A673 (cell line): ENCODE measurements at regions of chr7 and their contacts with region 1.

Region 1: DNA sequence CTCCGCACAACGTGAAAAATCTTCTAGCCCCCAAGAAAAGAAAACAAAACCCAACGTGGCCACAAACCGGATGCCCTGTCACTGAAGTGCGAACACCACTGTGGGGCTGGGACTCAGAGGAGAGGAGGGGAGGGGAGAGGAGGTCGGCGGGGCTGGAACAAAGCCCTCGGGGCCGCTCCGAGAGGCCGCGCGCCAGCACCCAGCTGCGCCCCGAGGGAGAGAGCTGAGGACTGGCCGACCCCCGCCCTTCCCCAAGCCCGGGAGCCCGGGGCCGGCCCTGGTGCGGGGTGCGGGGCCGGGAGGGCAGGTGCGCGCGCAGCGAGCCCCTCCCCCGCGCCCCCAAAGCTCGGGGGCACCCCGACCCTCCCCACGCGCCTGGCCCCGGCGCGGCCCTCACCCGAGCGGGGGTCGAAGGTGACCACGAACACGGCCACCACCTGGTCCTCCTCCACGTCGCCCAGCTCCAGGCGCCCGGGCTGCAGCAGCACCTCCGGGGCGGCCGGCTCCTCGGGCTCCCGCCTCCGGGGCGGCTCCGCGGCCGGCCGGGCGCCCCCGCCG is 398 bp downstream of the DENND11 start:
- DNase-seq: peak; percentile 57
- H3K4me3 ChIP-seq: peak overlapping the region; percentile 87
- H3K27ac ChIP-seq: peak overlapping the region; percentile 61
- H3K4me1 ChIP-seq: peaks cover 6% of the 10 kb centered on the region
- H3K27me3 ChIP-seq: no peaks in the 10 kb centered on the region
- CTCF ChIP-seq: no peak

Region 2: DNA sequence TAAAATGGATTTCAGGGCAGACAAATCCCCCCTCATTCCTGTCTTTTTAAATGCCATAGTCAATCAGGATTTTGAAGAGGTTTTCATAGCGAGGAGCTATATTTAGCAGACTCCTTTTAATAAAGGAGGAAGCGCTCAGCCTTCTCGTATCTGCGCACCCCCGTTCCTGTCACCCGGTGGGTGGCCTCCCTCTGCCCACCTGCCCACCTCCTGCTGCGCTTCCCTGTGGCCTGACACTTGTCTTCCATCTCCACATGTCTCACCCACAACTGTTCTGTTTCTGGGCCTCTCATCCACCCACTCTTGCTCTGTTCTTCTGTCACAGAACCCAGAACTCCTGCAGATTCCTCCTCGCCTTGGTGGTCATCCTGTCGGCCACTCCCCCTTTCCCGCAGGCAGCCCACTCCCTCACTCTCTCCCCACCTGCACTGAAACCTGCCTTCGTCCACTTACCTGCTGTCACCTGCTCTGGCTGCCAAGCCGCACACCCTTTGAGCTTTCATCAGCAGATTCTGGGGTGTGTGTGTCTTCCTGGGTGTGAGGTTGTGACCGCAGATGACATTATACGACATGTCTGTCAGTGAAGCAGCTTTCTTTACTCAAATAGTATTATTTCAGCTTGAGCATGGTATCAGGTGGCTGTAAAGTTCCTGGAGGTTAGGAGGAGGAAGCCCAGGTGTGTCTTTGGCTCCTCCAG is 313.9 kb before region 1 on chr7:
- CTCF ChIA-PET with region 1: no interaction called
- POLR2A ChIA-PET with region 1: no interaction called
- intact Hi-C with region 1: no loop called
- DNase-seq: no peak
- H3K4me3 ChIP-seq: no peak overlapping the region
- H3K27ac ChIP-seq: no peak overlapping the region
- H3K4me1 ChIP-seq: no peaks in the 10 kb centered on the region
- H3K27me3 ChIP-seq: no peaks in the 10 kb centered on the region
- CTCF ChIP-seq: no peak

Region 3: DNA sequence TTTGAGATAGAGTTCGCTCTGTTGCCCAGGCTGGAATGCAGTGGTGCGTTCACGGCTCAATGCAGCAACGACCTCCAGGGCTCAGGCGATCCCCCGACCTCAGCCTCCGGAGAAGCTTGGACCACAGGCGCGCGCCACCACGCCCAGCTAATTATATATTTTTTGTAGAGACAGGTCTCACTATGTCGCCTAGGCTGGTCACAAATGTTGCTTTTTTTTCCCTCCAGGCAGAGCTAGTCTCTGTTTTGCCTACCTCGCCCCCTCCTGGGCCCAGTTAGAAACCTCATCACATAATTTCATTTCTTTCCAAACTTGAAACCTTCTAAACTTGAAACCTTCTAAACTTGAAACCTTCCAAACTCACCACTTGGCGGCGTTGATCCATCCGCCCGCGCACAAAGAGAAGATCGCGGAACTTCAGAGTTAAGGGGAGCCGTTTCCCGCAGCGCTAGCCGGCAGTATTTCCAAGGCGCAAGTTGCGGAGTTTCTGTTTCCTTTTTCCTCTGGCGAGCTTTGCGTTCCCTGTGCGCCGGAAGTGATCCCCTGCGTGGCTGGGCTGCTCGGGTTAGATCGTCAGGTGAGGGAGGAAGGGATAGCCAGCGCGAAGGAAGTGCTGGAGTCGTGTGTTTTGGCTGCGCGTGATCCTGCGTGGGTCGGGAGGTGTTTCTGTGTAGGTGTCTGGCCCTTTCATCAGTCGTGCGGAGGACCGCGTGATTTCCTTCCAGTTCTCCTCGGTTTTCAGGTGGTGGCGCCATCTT is 36.4 kb after region 1 on chr7 and contains the start of gene SSBP1:
- CTCF ChIA-PET with region 1: no interaction called
- POLR2A ChIA-PET with region 1: no interaction called
- intact Hi-C with region 1: loop called (anchors 5 kb)
- DNase-seq: peak; percentile 98
- H3K4me3 ChIP-seq: peak within 1 kb of the TSS; percentile 66
- H3K27ac ChIP-seq: peak within 1 kb of the TSS; percentile 70
- H3K4me1 ChIP-seq: peaks cover 15% of the 10 kb centered on the region
- H3K27me3 ChIP-seq: no peaks in the 10 kb centered on the region
- CTCF ChIP-seq: peak; percentile 97
- total RNA-seq, gene SSBP1: 186 and 189 TPM in 2 replicates